CD8-positive, alpha-beta T cell (primary cell): ENCODE measurements at regions of chr1 and their contacts with region 1.

Region 1: DNA sequence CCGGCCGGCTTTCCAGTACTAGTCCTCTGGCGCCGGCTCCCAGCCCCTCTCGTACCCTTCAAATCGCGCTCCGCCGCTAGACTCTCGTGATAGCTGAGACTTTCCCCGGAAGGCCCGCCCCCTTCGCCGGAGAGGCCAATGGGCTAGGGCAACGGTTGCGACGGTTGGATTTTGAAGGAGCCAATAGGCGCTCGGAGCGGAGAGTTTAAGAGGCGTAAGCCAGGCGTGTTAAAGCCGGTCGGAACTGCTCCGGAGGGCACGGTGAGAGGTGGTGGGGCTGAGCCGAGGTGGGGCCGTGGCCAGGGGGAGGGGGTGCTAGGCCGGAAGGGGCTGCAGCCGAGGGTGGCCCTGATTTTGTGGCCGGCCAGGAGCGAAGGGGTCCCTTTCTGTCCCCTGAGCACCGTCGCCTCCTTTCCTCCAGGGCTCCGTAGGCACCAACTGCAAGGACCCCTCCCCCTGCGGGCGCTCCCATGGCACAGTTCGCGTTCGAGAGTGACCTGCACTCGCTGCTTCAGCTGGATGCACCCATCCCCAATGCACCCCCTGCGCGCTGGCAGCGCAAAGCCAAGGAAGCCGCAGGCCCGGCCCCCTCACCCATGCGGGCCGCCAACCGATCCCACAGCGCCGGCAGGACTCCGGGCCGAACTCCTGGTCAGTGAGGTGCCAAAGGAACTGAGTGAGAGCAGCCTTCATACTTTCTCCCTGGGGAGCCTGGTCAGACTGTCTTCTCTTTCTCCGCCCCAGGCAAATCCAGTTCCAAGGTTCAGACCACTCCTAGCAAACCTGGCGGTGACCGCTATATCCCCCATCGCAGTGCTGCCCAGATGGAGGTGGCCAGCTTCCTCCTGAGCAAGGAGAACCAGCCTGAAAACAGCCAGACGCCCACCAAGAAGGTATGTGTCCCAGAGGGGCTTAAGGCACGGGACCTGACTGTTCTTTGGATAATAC is at the start of gene CDC20:
- DNase-seq: peak; percentile 93 to 99 (median 97)
- ATAC-seq: peak; percentile 98
- H3K4me3 ChIP-seq: peak within 1 kb of the TSS; percentile 79 to 92
- H3K4me3 Mint-ChIP-seq: peak within 1 kb of the TSS; percentile 89
- H3K27ac ChIP-seq: peak within 1 kb of the TSS; percentile 62 to 76
- H3K27ac Mint-ChIP-seq: peak within 1 kb of the TSS; percentile 87
- H3K4me1 ChIP-seq: peaks cover 12% of the 10 kb centered on the region
- H3K4me1 Mint-ChIP-seq: peaks cover 15% of the 10 kb centered on the region
- H3K27me3 ChIP-seq: no peaks in the 10 kb centered on the region
- H3K27me3 Mint-ChIP-seq: no peaks in the 10 kb centered on the region
- CTCF ChIP-seq: no peak
- total RNA-seq, gene CDC20: 0.92 to 1.3 TPM

Region 2: GRCh38 chr1:43227143-43227764 is 131.8 kb before region 1 on chr1:
- CTCF ChIA-PET with region 1: interaction called, 9 read pairs
- POLR2A ChIA-PET with region 1: no interaction called
- intact Hi-C with region 1: loop called (anchors 1 kb)
- DNase-seq: peak; percentile 70 to 91 (median 82)
- ATAC-seq: peak; percentile 91
- H3K4me3 ChIP-seq: no peak overlapping the region
- H3K4me3 Mint-ChIP-seq: no peak overlapping the region
- H3K27ac ChIP-seq: no peak overlapping the region
- H3K27ac Mint-ChIP-seq: no peak overlapping the region
- H3K4me1 ChIP-seq: no peaks in the 10 kb centered on the region
- H3K4me1 Mint-ChIP-seq: no peaks in the 10 kb centered on the region
- H3K27me3 ChIP-seq: no peaks in the 10 kb centered on the region
- H3K27me3 Mint-ChIP-seq: peaks cover 3% of the 10 kb centered on the region
- CTCF ChIP-seq: peak; percentile 83

Region 3: DNA sequence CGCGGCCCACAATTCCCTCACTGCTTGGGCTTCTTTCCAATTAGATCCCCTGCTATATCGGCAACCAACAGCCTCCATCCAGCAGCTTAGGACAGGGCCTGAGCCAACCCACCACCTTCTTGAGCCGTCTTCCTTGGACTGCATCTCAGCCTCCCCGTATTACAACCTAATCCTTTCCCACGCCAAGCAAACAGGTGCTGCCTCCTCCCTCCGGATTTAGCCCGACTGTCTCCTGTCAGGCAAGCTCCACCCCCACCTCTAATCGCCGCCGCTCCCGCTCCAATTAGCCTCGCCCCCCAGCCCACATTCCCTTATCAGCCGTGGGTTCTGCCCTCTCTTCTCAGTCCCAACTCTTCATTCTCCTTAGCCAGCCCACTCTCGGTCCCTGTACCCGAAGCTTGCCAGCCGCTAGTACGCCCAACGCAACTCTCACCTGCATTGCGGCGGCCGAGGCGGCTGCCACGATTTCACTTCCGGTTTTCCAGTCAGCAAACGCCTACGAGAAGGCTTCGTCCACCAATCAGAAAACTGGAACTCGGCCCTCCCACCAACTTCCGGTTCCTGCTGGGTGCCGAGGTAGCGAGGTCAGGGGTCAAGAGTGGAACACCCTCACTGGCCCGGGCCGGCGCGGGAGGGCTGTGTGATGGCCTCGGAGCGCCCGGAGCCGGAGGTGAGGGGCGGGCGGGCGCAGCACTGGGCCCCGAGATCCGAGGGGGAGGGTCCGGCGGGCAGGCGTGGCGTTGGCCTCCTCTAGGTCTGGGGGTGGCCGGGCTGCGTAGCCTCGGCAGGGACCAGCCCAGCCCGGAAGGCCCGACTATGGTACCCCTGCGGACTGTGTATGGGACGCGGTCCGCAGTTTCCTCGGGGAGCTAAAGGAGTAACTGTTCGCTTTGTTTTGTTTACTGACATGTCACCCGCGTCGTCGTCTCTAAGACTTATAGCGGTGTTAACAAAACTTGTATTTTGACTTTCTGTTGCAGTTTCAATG is 30.6 kb after region 1 on chr1 and contains the starts of genes MED8 and SZT2:
- CTCF ChIA-PET with region 1: interaction called, 5 read pairs
- POLR2A ChIA-PET with region 1: interaction called, 8 read pairs
- intact Hi-C with region 1: loop called (anchors 1 kb)
- DNase-seq: peak; percentile 86 to 96 (median 92)
- ATAC-seq: peak; percentile 91
- H3K4me3 ChIP-seq: peak within 1 kb of the TSS; percentile 81 to 91
- H3K4me3 Mint-ChIP-seq: peak within 1 kb of the TSS; percentile 99
- H3K27ac ChIP-seq: peak within 1 kb of the TSS; percentile 70 to 86
- H3K27ac Mint-ChIP-seq: peak within 1 kb of the TSS; percentile 98
- H3K4me1 ChIP-seq: peaks cover 26% of the 10 kb centered on the region
- H3K4me1 Mint-ChIP-seq: peaks cover 57% of the 10 kb centered on the region
- H3K27me3 ChIP-seq: no peaks in the 10 kb centered on the region
- H3K27me3 Mint-ChIP-seq: no peaks in the 10 kb centered on the region
- CTCF ChIP-seq: no peak
- total RNA-seq, gene MED8: 18.8 to 20.2 TPM
- total RNA-seq, gene SZT2: 57.0 to 64.4 TPM

Region 4: DNA sequence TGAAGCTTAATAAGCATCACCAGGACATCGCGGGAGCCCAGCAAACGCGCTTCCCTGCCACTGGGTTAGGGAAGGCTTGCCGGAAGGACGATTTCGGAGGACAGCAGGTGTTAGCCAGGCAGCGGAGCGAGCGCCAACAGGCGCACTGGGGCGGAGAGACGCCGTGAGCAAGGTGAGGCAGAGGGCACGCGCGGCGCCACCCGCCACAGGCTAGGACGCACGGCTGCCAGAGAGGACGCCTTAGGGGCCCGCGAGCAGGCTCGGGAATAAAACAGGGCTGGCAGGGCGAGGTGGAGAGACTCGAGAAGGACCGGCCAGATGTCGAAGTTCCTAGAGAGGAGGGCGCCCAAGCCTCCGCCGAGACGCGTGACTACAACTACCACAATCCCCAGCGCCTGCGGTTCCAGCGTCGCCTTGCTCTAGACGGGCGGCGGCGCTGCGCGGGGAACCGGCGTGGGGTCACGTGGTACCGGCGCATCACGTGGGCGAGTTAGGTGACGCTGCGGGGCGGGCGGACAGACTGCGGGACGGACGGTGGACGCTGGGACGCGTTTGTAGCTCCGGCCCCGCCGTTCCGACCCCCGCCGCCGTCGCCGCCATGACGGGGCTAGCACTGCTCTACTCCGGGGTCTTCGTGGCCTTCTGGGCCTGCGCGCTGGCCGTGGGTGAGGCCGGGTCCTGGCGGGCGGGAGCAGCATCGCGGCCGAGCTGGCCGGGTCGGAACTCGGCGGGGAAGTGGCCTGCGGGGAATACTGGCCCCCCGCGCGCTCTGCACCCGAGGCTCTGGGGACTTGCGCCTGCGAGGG is 615.6 kb after region 1 on chr1 and contains the start of gene ATP6V0B:
- CTCF ChIA-PET with region 1: no interaction called
- POLR2A ChIA-PET with region 1: no interaction called
- intact Hi-C with region 1: loop called in 1 of 2 experiments (anchors 10 kb)
- DNase-seq: peak; percentile 83 to 96 (median 93)
- ATAC-seq: peak; percentile 69
- H3K4me3 ChIP-seq: peak within 1 kb of the TSS; percentile 95 to 97
- H3K4me3 Mint-ChIP-seq: peak within 1 kb of the TSS; percentile 92
- H3K27ac ChIP-seq: peak within 1 kb of the TSS; percentile 69 to 88
- H3K27ac Mint-ChIP-seq: peak within 1 kb of the TSS; percentile 95
- H3K4me1 ChIP-seq: peaks cover 37% of the 10 kb centered on the region
- H3K4me1 Mint-ChIP-seq: peaks cover 60% of the 10 kb centered on the region
- H3K27me3 ChIP-seq: no peaks in the 10 kb centered on the region
- H3K27me3 Mint-ChIP-seq: peaks cover 2% of the 10 kb centered on the region
- CTCF ChIP-seq: no peak
- total RNA-seq, gene ATP6V0B: 52.0 to 56.3 TPM